ENCODE measurements at regions of chr5 and their contacts with region 1.

Region 1: DNA sequence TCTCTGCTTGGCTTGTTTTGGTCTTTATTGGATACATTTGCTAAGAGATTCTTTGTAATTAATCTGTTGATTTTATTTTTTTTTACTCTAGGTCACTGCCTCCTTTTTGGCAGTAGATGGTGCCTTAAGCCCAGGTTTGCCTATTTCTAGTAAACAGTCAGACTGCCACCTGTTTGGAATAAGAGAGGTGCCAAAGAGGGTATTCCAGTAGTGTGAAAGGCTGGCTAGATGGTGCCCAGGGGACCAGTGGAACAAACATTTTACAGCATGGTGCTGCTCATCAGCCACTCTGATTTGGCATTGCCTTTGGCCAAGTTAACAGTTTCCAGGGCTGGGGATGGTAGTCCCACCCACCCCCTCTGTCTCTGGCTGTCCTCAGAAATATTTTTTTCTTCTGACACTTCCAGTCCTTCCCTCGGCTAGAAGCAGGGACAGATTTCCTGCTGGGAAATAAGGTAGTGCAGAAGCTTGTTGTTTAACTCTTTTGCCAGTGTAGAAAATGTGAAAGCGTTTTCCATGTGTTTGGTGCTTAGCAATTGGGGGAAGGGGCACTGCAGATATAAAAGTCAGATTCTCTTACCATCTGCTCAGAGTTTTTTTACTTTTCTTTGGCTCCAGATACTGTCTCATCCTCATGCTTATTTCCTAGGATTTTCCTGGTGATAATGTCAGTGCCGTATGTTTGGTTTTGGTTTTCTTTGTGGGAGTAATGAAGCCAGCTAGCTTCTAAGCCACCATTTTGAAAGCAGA is 36.6 kb upstream of the FBXL7 start:
- DNase-seq: peak in 1 of 7 donors; percentile 16
- H3K4me3 ChIP-seq: no peak overlapping the region
- H3K27ac ChIP-seq: no peak overlapping the region
- H3K4me1 ChIP-seq: no peaks in the 10 kb centered on the region
- H3K27me3 ChIP-seq: no peaks in the 10 kb centered on the region
- CTCF ChIP-seq: peak in 5 of 6 experiments; percentile 25 to 67 (median 56)
- POLR2A ChIP-seq: no peak

Region 2: DNA sequence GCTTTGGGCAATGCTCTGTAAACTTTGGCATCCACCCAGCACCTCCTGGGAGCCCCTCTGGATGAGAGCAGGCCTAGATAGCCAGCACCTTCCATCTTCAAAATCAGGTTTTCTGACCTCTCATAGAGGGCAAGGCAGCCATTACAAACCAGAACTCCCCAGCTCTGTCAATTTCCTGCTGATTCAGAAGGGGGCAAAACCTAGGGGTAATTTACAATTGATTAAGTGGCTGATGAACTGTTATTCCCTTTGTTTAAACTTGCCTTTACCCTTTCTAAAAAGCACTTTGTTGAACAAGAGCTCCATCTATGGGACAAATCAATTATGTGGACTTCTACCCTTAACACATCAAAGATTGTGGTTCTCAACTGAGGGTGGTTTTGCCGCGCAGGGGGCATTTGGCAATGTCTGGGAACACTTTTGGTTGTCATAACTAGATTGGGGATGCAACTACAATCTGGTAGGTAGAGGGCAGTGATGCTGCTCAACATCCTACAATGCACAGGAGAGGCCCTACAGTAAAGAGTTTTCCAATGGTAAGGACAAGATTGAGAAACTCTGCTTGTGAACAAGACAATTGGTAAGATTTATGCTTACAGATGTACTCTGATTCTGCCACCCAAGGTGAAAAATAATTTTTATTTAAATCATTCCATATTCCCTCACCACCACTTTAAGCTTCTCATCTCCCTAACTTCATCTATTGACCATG is 532.1 kb after region 1 on chr5:
- intact Hi-C with region 1: loop called in 1 of 2 experiments (anchors 10 kb)
- DNase-seq: no peak
- H3K4me3 ChIP-seq: no peak overlapping the region
- H3K27ac ChIP-seq: no peak overlapping the region
- H3K4me1 ChIP-seq: no peaks in the 10 kb centered on the region
- H3K27me3 ChIP-seq: no peaks in the 10 kb centered on the region
- CTCF ChIP-seq: peak; percentile 36 to 64 (median 54)
- POLR2A ChIP-seq: no peak

Measured in adrenal gland (tissue), 19 donors.